ENCODE measurements at regions of chr9 and their contacts with region 1.

Region 1: DNA sequence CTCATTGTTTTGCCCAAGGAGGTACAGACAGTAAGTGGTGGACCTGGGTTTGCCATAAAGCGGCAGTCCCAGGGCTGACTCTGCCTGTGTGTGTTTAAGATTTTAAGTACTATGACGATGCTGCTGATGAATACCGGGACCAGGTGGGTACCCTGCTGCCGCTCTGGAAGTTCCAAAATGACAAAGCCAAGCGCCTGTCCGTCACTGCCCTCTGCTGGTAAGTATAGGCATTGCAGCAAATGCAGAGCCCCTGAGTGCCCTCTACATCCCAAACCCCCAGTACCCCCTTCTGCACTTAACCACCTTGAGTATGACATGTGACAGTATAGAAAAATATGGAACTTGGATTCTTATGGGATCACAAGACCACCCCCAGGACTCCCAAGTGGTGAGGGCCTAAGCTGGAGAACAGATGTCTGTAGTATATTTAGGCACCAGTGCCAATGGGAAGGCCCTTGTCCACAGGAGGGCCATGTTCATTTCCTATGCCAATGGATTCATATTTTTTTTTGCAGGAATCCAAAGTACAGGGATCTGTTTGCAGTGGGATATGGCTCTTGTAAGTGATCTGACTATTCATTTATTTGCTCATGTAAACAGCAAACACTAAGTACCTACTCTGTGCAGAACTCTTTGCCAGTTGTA is 22.0 kb downstream of the ENHO start:
- DNase-seq: peak; percentile 24 to 80 (median 59)
- ATAC-seq: peak; percentile 69 to 81 (median 75)
- H3K4me3 ChIP-seq: no peak overlapping the region
- H3K4me3 Mint-ChIP-seq: no peak overlapping the region
- H3K27ac ChIP-seq: no peak overlapping the region
- H3K27ac Mint-ChIP-seq: no peak overlapping the region
- H3K4me1 ChIP-seq: peaks cover 0 to 2% of the 10 kb centered on the region in 2 experiments
- H3K4me1 Mint-ChIP-seq: no peaks in the 10 kb centered on the region
- H3K27me3 ChIP-seq: peaks cover 0 to 5% of the 10 kb centered on the region in 2 experiments
- H3K27me3 Mint-ChIP-seq: peaks cover 0 to 12% of the 10 kb centered on the region in 2 donors

Region 2: DNA sequence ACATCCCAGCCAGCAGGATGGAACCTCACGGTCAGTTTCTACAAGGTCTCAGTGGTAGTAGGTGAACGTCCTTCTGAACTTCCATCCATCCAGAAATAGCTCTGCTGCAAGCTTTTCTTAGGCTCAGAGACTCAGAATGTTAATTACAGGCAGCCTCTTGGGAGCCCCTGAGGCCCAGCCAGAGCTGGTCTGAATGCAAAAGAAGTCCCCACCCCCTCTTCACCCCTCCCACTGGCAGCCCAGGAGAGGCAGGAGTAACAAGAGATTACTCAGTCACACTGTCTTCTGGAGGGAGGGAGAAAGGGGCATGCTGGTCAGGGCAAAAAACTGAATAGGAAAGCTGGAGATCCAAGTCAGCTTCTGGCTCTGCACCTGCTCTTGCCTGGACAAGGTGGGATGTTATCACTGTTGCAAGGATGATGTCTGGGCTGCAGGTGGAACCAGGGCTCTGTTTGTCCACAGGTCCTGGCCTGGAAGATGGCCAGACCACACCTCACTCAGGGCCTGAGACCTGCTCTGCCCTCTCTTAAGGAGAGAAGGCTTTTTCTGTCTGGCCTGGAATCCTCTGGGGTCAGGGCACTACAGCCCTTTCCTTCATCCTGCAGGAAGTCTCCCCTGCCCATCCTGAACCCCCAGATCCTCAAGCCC is 12.9 kb after region 1 on chr9:
- CTCF ChIA-PET with region 1: interaction called in 1 of 2 experiments, 11 read pairs
- POLR2A ChIA-PET with region 1: no interaction called
- DNase-seq: no peak
- ATAC-seq: no peak
- H3K4me3 ChIP-seq: no peak overlapping the region
- H3K4me3 Mint-ChIP-seq: no peak overlapping the region
- H3K27ac ChIP-seq: no peak overlapping the region
- H3K27ac Mint-ChIP-seq: no peak overlapping the region
- H3K4me1 ChIP-seq: no peaks in the 10 kb centered on the region
- H3K4me1 Mint-ChIP-seq: no peaks in the 10 kb centered on the region
- H3K27me3 ChIP-seq: peaks cover 0 to 6% of the 10 kb centered on the region in 2 experiments
- H3K27me3 Mint-ChIP-seq: no peaks in the 10 kb centered on the region

Region 3: DNA sequence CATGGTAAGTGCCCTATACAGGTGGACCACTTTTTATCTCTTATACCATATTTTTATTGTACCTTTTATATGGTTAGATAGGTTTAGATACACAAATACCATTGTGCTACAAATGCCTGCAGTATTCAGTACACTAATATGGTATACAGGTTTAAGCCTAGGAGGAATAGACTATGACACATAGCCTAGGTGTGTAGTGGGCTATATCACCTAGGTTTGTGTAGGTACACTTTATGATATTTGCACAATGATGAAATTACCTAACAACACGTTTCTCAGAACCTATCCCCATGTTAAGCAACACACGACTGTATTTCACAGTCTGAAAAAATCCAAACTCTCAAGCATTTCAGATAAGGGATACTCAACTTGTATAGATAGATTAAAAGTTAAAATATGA is 447.7 kb after region 1 on chr9:
- CTCF ChIA-PET with region 1: no interaction called
- POLR2A ChIA-PET with region 1: no interaction called
- DNase-seq: no peak
- ATAC-seq: no peak
- H3K4me3 ChIP-seq: no peak overlapping the region
- H3K4me3 Mint-ChIP-seq: no peak overlapping the region
- H3K27ac ChIP-seq: no peak overlapping the region
- H3K27ac Mint-ChIP-seq: no peak overlapping the region
- H3K4me1 ChIP-seq: no peaks in the 10 kb centered on the region
- H3K4me1 Mint-ChIP-seq: no peaks in the 10 kb centered on the region
- H3K27me3 ChIP-seq: peaks cover 0 to 2% of the 10 kb centered on the region in 2 experiments
- H3K27me3 Mint-ChIP-seq: peaks cover 33 to 34% of the 10 kb centered on the region in 2 donors

Measured in T-cell (primary cell).